ENCODE measurements at regions of chr3 and their contacts with region 1.

Region 1: GRCh38 chr3:32675164-32675563 is 9.8 kb upstream of the CNOT10 start:
- DNase-seq: no peak
- ATAC-seq: peak in 2 of 4 donors; percentile 45 to 52
- H3K4me3 ChIP-seq: no peak overlapping the region
- H3K27ac ChIP-seq: no peak overlapping the region
- H3K4me1 ChIP-seq: no peaks in the 10 kb centered on the region
- H3K27me3 ChIP-seq: no peaks in the 10 kb centered on the region
- CTCF ChIP-seq: no peak
- POLR2A ChIP-seq: no peak

Region 2: DNA sequence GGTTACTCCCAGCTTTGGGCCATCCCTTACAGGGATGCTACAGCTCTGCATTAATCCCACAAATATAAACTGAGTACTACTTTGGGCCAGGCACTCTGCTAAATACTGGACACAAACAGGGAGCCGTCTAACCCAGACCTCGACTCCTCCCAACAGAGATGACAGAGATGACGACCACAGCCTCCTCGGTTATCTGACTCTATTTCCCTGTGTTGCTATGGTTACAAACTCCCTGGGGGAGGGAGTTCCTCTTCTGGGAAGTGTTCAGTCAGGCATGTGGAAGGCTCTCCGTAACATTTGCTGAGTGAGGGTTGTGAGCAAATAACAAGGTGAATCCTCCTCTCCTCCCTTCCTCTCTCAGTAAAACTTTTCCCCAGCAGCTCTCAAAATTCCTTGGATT is 290.2 kb before region 1 on chr3:
- intact Hi-C with region 1: loop called in 1 of 10 experiments (anchors 10 kb)
- DNase-seq: peak in 3 of 5 donors; percentile 29 to 41 (median 30)
- ATAC-seq: peak in 3 of 4 donors; percentile 61 to 87 (median 70)
- H3K4me3 ChIP-seq: no peak overlapping the region
- H3K27ac ChIP-seq: no peak overlapping the region
- H3K4me1 ChIP-seq: peaks cover 0 to 10% (median 0%) of the 10 kb centered on the region in 12 donors
- H3K27me3 ChIP-seq: peaks cover 0 to 2% (median 0%) of the 10 kb centered on the region in 9 donors
- CTCF ChIP-seq: no peak
- POLR2A ChIP-seq: no peak

Measured in heart left ventricle (tissue), 16 donors.